CD8-positive, alpha-beta T cell (primary cell): ENCODE measurements at regions of chr12 and their contacts with region 1.

Region 1: DNA sequence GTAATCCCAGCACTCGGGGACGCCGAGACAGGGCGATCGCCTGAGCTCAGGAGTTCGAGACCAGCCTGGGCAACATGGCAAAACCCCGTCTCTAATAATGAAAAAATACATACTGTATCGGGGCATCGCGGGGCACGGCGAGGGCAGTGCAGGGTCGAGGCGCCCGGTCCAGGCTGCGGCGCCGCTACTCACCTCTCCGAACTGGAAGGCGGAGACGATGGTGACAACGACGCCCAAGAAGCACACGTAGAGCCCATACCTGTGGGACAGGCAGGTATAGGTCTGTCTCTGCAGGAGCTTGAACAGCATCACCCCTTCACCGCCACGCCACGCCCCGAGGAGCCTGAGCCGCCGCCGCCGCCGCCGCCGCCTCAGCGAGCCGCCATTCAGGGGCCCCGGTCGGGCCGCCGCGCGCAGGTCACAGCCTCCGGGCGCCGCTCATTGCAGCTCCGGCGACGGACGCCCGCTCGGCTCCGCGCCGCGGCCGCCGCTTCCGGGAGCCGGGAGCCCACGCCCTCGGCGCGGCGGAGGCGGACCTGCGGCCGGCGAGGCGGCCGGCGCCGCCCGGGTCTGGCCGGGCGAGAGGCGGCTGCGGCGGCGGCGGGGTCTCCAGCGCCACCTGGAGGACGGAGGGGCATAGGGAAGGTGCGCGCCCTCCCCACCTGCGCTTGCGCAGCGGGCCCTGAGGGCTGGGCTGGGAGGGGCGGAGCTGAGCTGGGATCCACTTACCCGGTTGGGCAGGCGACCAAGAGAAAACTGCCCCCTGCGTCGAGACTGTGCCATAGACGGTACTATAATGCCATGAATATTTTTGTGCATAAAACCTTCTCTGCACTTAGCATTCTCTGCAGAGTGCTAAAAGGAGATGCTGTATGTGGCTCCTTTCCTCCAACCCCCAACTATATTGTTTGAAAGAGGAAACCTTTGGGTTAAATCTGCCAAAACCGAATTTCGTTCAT is at the start of gene GNPTAB:
- DNase-seq: peak; percentile 94 to 98 (median 96)
- ATAC-seq: peak; percentile 93
- H3K4me3 ChIP-seq: peak within 1 kb of the TSS; percentile 73 to 88
- H3K4me3 Mint-ChIP-seq: peak within 1 kb of the TSS; percentile 98
- H3K27ac ChIP-seq: peak within 1 kb of the TSS; percentile 68 to 75
- H3K27ac Mint-ChIP-seq: peak within 1 kb of the TSS; percentile 95
- H3K4me1 ChIP-seq: peaks cover 29% of the 10 kb centered on the region
- H3K4me1 Mint-ChIP-seq: peaks cover 40% of the 10 kb centered on the region
- H3K27me3 ChIP-seq: no peaks in the 10 kb centered on the region
- H3K27me3 Mint-ChIP-seq: no peaks in the 10 kb centered on the region
- CTCF ChIP-seq: peak; percentile 53
- total RNA-seq, gene GNPTAB: 40.4 to 46.9 TPM

Region 2: GRCh38 chr12:101280006-101280505 is 550.6 kb before region 1 on chr12 and contains the start of gene UTP20:
- CTCF ChIA-PET with region 1: no interaction called
- POLR2A ChIA-PET with region 1: no interaction called
- intact Hi-C with region 1: loop called in 1 of 2 experiments (anchors 5 kb)
- DNase-seq: peak; percentile 84 to 96 (median 94)
- ATAC-seq: peak; percentile 100
- H3K4me3 ChIP-seq: peak within 1 kb of the TSS; percentile 98 to 100
- H3K4me3 Mint-ChIP-seq: peak within 1 kb of the TSS; percentile 96
- H3K27ac ChIP-seq: peak within 1 kb of the TSS; percentile 30 to 65
- H3K27ac Mint-ChIP-seq: peak within 1 kb of the TSS; percentile 80
- H3K4me1 ChIP-seq: peaks cover 11% of the 10 kb centered on the region
- H3K4me1 Mint-ChIP-seq: peaks cover 26% of the 10 kb centered on the region
- H3K27me3 ChIP-seq: peaks cover 0 to 4% of the 10 kb centered on the region in 2 experiments
- H3K27me3 Mint-ChIP-seq: peaks cover 6% of the 10 kb centered on the region
- CTCF ChIP-seq: no peak
- total RNA-seq, gene UTP20: 11.2 to 12.9 TPM

Region 3: GRCh38 chr12:101773650-101774162 is 56.9 kb before region 1 on chr12:
- CTCF ChIA-PET with region 1: interaction called, 74 read pairs
- POLR2A ChIA-PET with region 1: interaction called, 8 read pairs
- intact Hi-C with region 1: loop called (anchors 2 kb)
- DNase-seq: peak; percentile 43 to 83 (median 70)
- ATAC-seq: peak; percentile 96
- H3K4me3 ChIP-seq: no peak overlapping the region
- H3K4me3 Mint-ChIP-seq: no peak overlapping the region
- H3K27ac ChIP-seq: no peak overlapping the region
- H3K27ac Mint-ChIP-seq: no peak overlapping the region
- H3K4me1 ChIP-seq: no peaks in the 10 kb centered on the region
- H3K4me1 Mint-ChIP-seq: no peaks in the 10 kb centered on the region
- H3K27me3 ChIP-seq: no peaks in the 10 kb centered on the region
- H3K27me3 Mint-ChIP-seq: no peaks in the 10 kb centered on the region
- CTCF ChIP-seq: peak; percentile 95

Region 4: GRCh38 chr12:101792051-101792931 is 38.4 kb before region 1 on chr12:
- CTCF ChIA-PET with region 1: interaction called, 54 read pairs
- POLR2A ChIA-PET with region 1: interaction called, 5 read pairs
- intact Hi-C with region 1: loop called (anchors 1 to 2 kb)
- DNase-seq: peak in 2 of 9 experiments; percentile 22 to 43
- ATAC-seq: peak; percentile 38
- H3K4me3 ChIP-seq: no peak overlapping the region
- H3K4me3 Mint-ChIP-seq: no peak overlapping the region
- H3K27ac ChIP-seq: peak overlapping the region in 1 of 2 experiments; percentile 47
- H3K27ac Mint-ChIP-seq: no peak overlapping the region
- H3K4me1 ChIP-seq: peaks cover 10% of the 10 kb centered on the region
- H3K4me1 Mint-ChIP-seq: peaks cover 30% of the 10 kb centered on the region
- H3K27me3 ChIP-seq: no peaks in the 10 kb centered on the region
- H3K27me3 Mint-ChIP-seq: no peaks in the 10 kb centered on the region
- CTCF ChIP-seq: no peak

Region 5: DNA sequence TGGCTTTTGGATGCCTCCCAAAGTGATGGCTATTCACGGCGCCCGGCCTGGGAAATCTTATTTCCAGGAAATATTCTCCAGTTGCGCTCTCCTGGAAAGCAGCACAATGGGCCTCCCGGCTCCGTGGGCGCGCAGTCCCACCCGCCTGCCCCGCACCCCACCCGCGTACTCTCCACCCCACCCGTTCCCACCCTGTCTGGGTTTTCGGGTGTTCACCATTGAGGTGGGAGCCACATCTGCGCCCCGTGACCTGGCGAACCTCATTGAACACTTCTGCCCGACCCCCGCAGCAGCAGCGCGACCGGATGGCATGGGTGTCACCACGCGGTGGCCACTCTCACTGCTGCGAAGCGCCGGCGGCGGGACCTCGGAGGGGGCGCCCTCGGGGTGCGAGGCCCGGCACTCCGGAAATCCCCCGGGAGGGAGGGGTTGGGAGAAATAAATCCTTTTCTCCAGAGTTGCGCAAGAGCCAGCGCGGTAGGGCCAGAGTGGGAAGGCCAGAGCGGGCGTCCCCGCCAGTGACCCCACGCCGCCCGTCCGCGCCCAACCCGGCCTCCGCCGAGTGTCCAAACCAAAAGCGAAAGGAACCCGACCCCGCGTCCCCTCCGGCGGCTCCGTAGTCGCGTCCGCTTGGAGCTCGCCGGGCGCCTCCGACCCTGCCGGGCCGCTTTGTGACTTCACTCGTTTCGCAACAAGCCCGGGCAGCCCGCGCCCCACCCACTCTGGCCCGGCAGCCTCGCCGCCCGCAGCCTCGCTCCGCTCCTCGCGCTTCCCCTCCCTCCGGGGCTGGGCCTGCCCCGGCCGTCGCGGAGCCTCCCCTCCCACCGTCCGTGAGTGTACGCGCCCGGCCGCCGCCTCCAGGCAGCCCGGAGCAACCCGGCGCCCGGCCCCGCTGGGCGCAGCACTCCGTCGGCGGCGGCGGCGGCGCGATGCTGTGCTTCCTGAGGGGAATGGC is 46.5 kb after region 1 on chr12 and contains the start of gene DRAM1:
- CTCF ChIA-PET with region 1: no interaction called
- POLR2A ChIA-PET with region 1: interaction called, 5 read pairs
- intact Hi-C with region 1: loop called (anchors 2 kb)
- DNase-seq: peak; percentile 43 to 89 (median 67)
- ATAC-seq: peak; percentile 79
- H3K4me3 ChIP-seq: peak within 1 kb of the TSS; percentile 78 to 90
- H3K4me3 Mint-ChIP-seq: peak within 1 kb of the TSS; percentile 91
- H3K27ac ChIP-seq: peak within 1 kb of the TSS; percentile 85 to 88
- H3K27ac Mint-ChIP-seq: peak within 1 kb of the TSS; percentile 77
- H3K4me1 ChIP-seq: peaks cover 7% of the 10 kb centered on the region
- H3K4me1 Mint-ChIP-seq: peaks cover 11% of the 10 kb centered on the region
- H3K27me3 ChIP-seq: no peaks in the 10 kb centered on the region
- H3K27me3 Mint-ChIP-seq: no peaks in the 10 kb centered on the region
- CTCF ChIP-seq: no peak
- total RNA-seq, gene DRAM1: 3.5 to 7.5 TPM